Activated B cell treated with CpG ODN at 0.5 μM for 24 hours (primary cell): ENCODE measurements at regions of chr7 and their contacts with region 1.

Region 1: GRCh38 chr7:93055543-93056107 is 62.2 kb downstream of the SAMD9 start:
- DNase-seq: no peak
- ATAC-seq: peak; percentile 79
- H3K4me3 Mint-ChIP-seq: no peak overlapping the region
- H3K27ac Mint-ChIP-seq: no peak overlapping the region
- H3K4me1 Mint-ChIP-seq: peaks cover 6% of the 10 kb centered on the region
- H3K27me3 Mint-ChIP-seq: no peaks in the 10 kb centered on the region
- CTCF ChIP-seq: peak; percentile 74

Region 2: DNA sequence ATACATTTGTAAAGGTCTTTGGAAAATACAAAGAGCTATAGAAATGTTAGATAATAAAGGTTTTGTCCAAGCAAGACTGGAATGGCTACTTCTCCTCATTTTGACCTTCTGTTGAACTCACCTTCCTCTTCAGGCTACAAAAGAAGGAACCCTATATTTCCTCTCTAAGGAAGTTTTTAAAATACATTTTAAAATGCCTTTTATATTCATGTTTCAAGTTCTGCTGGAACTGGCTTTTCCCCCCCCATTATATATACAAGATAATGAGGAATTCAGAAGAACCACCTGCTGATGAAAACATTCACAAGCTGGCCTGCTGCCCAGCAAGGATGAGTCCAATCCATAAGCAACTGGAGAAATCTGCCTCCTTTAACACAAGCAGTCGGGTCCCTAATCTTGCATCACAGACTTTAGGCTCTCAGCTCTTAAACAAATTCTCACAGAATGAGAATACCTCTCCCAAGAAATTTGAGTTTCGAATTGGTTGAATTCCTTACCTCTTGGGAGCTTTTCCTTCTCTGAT is 1219.7 kb before region 1 on chr7:
- CTCF ChIA-PET with region 1: no interaction called
- POLR2A ChIA-PET with region 1: no interaction called
- intact Hi-C with region 1: loop called (anchors 10 kb)
- DNase-seq: no peak
- ATAC-seq: no peak
- H3K4me3 Mint-ChIP-seq: no peak overlapping the region
- H3K27ac Mint-ChIP-seq: no peak overlapping the region
- H3K4me1 Mint-ChIP-seq: no peaks in the 10 kb centered on the region
- H3K27me3 Mint-ChIP-seq: no peaks in the 10 kb centered on the region
- CTCF ChIP-seq: no peak

Region 3: GRCh38 chr7:92425321-92425947 is 630.2 kb before region 1 on chr7:
- CTCF ChIA-PET with region 1: no interaction called
- POLR2A ChIA-PET with region 1: no interaction called
- intact Hi-C with region 1: loop called (anchors 1 kb)
- DNase-seq: no peak
- ATAC-seq: no peak
- H3K4me3 Mint-ChIP-seq: no peak overlapping the region
- H3K27ac Mint-ChIP-seq: no peak overlapping the region
- H3K4me1 Mint-ChIP-seq: peaks cover 6% of the 10 kb centered on the region
- H3K27me3 Mint-ChIP-seq: peaks cover 11% of the 10 kb centered on the region
- CTCF ChIP-seq: no peak

Region 4: GRCh38 chr7:92691578-92691977 is 364.0 kb before region 1 on chr7:
- CTCF ChIA-PET with region 1: no interaction called
- POLR2A ChIA-PET with region 1: no interaction called
- intact Hi-C with region 1: loop called (anchors 1 kb)
- DNase-seq: no peak
- ATAC-seq: peak; percentile 61
- H3K4me3 Mint-ChIP-seq: no peak overlapping the region
- H3K27ac Mint-ChIP-seq: no peak overlapping the region
- H3K4me1 Mint-ChIP-seq: peaks cover 9% of the 10 kb centered on the region
- H3K27me3 Mint-ChIP-seq: no peaks in the 10 kb centered on the region
- CTCF ChIP-seq: no peak

Region 5: GRCh38 chr7:92868683-92869293 is 186.8 kb before region 1 on chr7:
- CTCF ChIA-PET with region 1: no interaction called
- POLR2A ChIA-PET with region 1: no interaction called
- intact Hi-C with region 1: loop called (anchors 10 kb)
- DNase-seq: no peak
- ATAC-seq: no peak
- H3K4me3 Mint-ChIP-seq: no peak overlapping the region
- H3K27ac Mint-ChIP-seq: no peak overlapping the region
- H3K4me1 Mint-ChIP-seq: no peaks in the 10 kb centered on the region
- H3K27me3 Mint-ChIP-seq: peaks cover 1% of the 10 kb centered on the region
- CTCF ChIP-seq: no peak

Region 6: GRCh38 chr7:92944633-92945032 is 111.0 kb before region 1 on chr7:
- CTCF ChIA-PET with region 1: no interaction called
- POLR2A ChIA-PET with region 1: no interaction called
- intact Hi-C with region 1: no loop called
- DNase-seq: no peak
- ATAC-seq: no peak
- H3K4me3 Mint-ChIP-seq: no peak overlapping the region
- H3K27ac Mint-ChIP-seq: no peak overlapping the region
- H3K4me1 Mint-ChIP-seq: no peaks in the 10 kb centered on the region
- H3K27me3 Mint-ChIP-seq: no peaks in the 10 kb centered on the region
- CTCF ChIP-seq: no peak

Region 7: GRCh38 chr7:92997152-92997551 is 58.5 kb before region 1 on chr7:
- CTCF ChIA-PET with region 1: no interaction called
- POLR2A ChIA-PET with region 1: no interaction called
- intact Hi-C with region 1: no loop called
- DNase-seq: no peak
- ATAC-seq: no peak
- H3K4me3 Mint-ChIP-seq: no peak overlapping the region
- H3K27ac Mint-ChIP-seq: no peak overlapping the region
- H3K4me1 Mint-ChIP-seq: no peaks in the 10 kb centered on the region
- H3K27me3 Mint-ChIP-seq: peaks cover 3% of the 10 kb centered on the region
- CTCF ChIP-seq: no peak